T-cell (primary cell): ENCODE measurements at regions of chr7 and their contacts with region 1.

Region 1: GRCh38 chr7:2950578-2950977 is 93.1 kb downstream of the CARD11 start:
- DNase-seq: no peak
- ATAC-seq: no peak
- H3K4me3 ChIP-seq: no peak overlapping the region
- H3K4me3 Mint-ChIP-seq: no peak overlapping the region
- H3K27ac ChIP-seq: no peak overlapping the region
- H3K27ac Mint-ChIP-seq: peak overlapping the region; percentile 30 to 78
- H3K4me1 ChIP-seq: peaks cover 10 to 33% of the 10 kb centered on the region in 2 experiments
- H3K4me1 Mint-ChIP-seq: peaks cover 42 to 62% (median 60%) of the 10 kb centered on the region in 3 donors
- H3K27me3 ChIP-seq: no peaks in the 10 kb centered on the region
- H3K27me3 Mint-ChIP-seq: no peaks in the 10 kb centered on the region

Region 2: DNA sequence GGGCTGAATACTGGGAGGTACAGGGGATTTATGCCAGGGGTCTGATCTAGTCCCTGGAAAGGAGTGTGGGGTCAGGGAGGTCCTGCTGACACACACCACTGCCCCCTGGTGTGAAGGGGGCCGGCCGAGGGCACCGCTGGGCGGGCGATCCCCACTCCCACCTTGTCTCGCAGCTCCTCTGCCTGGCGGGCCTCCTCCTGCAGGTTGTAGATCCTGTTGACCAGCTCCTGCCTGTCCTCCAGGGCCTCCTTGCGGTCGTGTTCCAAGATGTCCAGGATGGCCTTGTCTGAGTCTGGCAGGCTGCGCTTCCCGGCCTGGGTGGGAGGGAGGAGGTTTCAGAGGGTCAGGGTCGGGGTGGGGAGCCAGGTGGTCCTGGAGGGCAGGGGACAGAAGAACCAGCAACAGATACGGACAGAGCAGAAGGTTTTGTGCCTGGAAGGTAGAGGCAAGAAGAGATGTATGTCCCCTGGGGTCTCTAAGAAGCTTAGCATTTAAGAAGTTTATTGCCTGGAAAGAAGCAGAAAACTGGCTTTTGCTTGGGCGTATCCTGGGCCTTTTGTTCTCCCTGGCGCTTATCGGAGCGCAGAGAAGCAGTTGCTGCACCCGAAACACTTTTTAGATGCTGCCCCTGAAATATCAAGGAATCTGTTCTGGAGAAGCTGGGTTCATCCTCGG is 11.9 kb before region 1 on chr7:
- CTCF ChIA-PET with region 1: interaction called, 5 to 10 read pairs
- POLR2A ChIA-PET with region 1: no interaction called
- DNase-seq: peak in 1 of 35 experiments; percentile 18
- ATAC-seq: no peak
- H3K4me3 ChIP-seq: no peak overlapping the region
- H3K4me3 Mint-ChIP-seq: no peak overlapping the region
- H3K27ac ChIP-seq: no peak overlapping the region
- H3K27ac Mint-ChIP-seq: no peak overlapping the region
- H3K4me1 ChIP-seq: no peaks in the 10 kb centered on the region
- H3K4me1 Mint-ChIP-seq: peaks cover 3 to 7% (median 6%) of the 10 kb centered on the region in 3 donors
- H3K27me3 ChIP-seq: no peaks in the 10 kb centered on the region
- H3K27me3 Mint-ChIP-seq: no peaks in the 10 kb centered on the region

Region 3: DNA sequence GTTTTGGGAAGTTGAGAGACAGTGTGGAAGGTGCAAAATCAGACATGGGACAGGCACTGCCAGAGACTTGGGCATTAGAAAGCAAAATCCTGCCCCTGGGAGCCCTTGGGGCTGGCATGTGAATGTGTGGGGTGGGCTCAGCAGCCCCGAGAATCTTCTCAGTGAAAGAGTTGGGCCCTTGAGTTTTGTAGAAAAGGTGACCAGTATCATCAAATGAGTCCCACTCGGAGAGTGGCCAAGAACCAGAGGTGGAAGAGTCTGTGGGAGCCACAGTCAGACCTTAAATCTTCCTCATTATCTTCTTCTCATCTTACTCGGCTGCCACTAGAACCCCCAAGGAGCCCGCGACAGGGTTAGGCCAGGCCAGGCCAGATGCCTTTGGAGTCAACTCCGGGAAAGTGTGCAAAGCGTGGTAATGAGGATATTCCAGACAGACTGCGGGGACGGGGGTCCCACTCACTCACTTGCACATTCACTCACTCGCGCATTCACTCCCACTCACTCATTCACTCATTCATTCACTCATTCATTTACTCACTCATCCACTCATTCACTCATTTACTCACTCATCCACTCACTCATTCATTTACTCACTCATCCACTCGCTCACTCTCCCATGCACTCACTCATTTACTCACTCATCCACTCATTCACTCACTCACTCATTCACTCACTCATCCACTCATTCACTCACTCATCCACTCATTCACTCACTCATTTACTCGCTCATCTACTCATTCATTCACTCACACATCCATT is 18.2 kb after region 1 on chr7:
- CTCF ChIA-PET with region 1: no interaction called
- POLR2A ChIA-PET with region 1: no interaction called
- DNase-seq: peak in 2 of 35 experiments; percentile 11 to 19
- ATAC-seq: no peak
- H3K4me3 ChIP-seq: no peak overlapping the region
- H3K4me3 Mint-ChIP-seq: no peak overlapping the region
- H3K27ac ChIP-seq: no peak overlapping the region
- H3K27ac Mint-ChIP-seq: no peak overlapping the region
- H3K4me1 ChIP-seq: peaks cover 4 to 24% of the 10 kb centered on the region in 2 experiments
- H3K4me1 Mint-ChIP-seq: peaks cover 33 to 40% (median 34%) of the 10 kb centered on the region in 3 donors
- H3K27me3 ChIP-seq: no peaks in the 10 kb centered on the region
- H3K27me3 Mint-ChIP-seq: no peaks in the 10 kb centered on the region